CD8-positive, alpha-beta T cell (primary cell): ENCODE measurements at regions of chr3 and their contacts with region 1.

Region 1: GRCh38 chr3:42819351-42819965 is 10.2 kb downstream of the ACKR2 start:
- DNase-seq: no peak
- ATAC-seq: no peak
- H3K4me3 ChIP-seq: no peak overlapping the region
- H3K4me3 Mint-ChIP-seq: no peak overlapping the region
- H3K27ac ChIP-seq: no peak overlapping the region
- H3K27ac Mint-ChIP-seq: no peak overlapping the region
- H3K4me1 ChIP-seq: no peaks in the 10 kb centered on the region
- H3K4me1 Mint-ChIP-seq: no peaks in the 10 kb centered on the region
- H3K27me3 ChIP-seq: no peaks in the 10 kb centered on the region
- H3K27me3 Mint-ChIP-seq: no peaks in the 10 kb centered on the region
- CTCF ChIP-seq: no peak

Region 2: GRCh38 chr3:42839616-42840015 is 20.2 kb after region 1 on chr3:
- CTCF ChIA-PET with region 1: interaction called, 10 read pairs
- POLR2A ChIA-PET with region 1: no interaction called
- intact Hi-C with region 1: no loop called
- DNase-seq: peak in 5 of 9 experiments; percentile 30 to 69 (median 32)
- ATAC-seq: peak; percentile 98
- H3K4me3 ChIP-seq: no peak overlapping the region
- H3K4me3 Mint-ChIP-seq: no peak overlapping the region
- H3K27ac ChIP-seq: no peak overlapping the region
- H3K27ac Mint-ChIP-seq: no peak overlapping the region
- H3K4me1 ChIP-seq: no peaks in the 10 kb centered on the region
- H3K4me1 Mint-ChIP-seq: peaks cover 4% of the 10 kb centered on the region
- H3K27me3 ChIP-seq: no peaks in the 10 kb centered on the region
- H3K27me3 Mint-ChIP-seq: peaks cover 7% of the 10 kb centered on the region
- CTCF ChIP-seq: peak; percentile 64

Region 3: GRCh38 chr3:42926310-42926709 is 106.9 kb after region 1 on chr3:
- CTCF ChIA-PET with region 1: no interaction called
- POLR2A ChIA-PET with region 1: no interaction called
- intact Hi-C with region 1: no loop called
- DNase-seq: peak in 1 of 9 experiments; percentile 46
- ATAC-seq: peak; percentile 69
- H3K4me3 ChIP-seq: no peak overlapping the region
- H3K4me3 Mint-ChIP-seq: no peak overlapping the region
- H3K27ac ChIP-seq: no peak overlapping the region
- H3K27ac Mint-ChIP-seq: peak overlapping the region; percentile 20
- H3K4me1 ChIP-seq: peaks cover 14% of the 10 kb centered on the region
- H3K4me1 Mint-ChIP-seq: peaks cover 16% of the 10 kb centered on the region
- H3K27me3 ChIP-seq: no peaks in the 10 kb centered on the region
- H3K27me3 Mint-ChIP-seq: no peaks in the 10 kb centered on the region
- CTCF ChIP-seq: no peak